Panc1 (cell line): ENCODE measurements at regions of chr2 and their contacts with region 1.

Region 1: GRCh38 chr2:9142551-9143263 is 63.9 kb upstream of the ASAP2 start:
- DNase-seq: peak; percentile 71
- ATAC-seq: peak; percentile 92
- H3K4me3 ChIP-seq: peak overlapping the region; percentile 29 to 66
- H3K27ac ChIP-seq: peak overlapping the region; percentile 94
- H3K4me1 ChIP-seq: peaks cover 32% of the 10 kb centered on the region
- H3K27me3 ChIP-seq: no peaks in the 10 kb centered on the region
- CTCF ChIP-seq: peak; percentile 99

Region 2: GRCh38 chr2:8872821-8873432 is 269.8 kb before region 1 on chr2:
- CTCF ChIA-PET with region 1: interaction called, 6 read pairs
- POLR2A ChIA-PET with region 1: no interaction called
- in situ Hi-C with region 1: no loop called
- intact Hi-C with region 1: loop called (anchors 2 kb)
- DNase-seq: peak; percentile 43
- ATAC-seq: peak; percentile 69
- H3K4me3 ChIP-seq: no peak overlapping the region
- H3K27ac ChIP-seq: no peak overlapping the region
- H3K4me1 ChIP-seq: no peaks in the 10 kb centered on the region
- H3K27me3 ChIP-seq: no peaks in the 10 kb centered on the region
- CTCF ChIP-seq: peak; percentile 75

Region 3: GRCh38 chr2:9205963-9206948 is 63.5 kb after region 1 on chr2 and contains the start of gene ASAP2:
- CTCF ChIA-PET with region 1: interaction called, 3 read pairs
- POLR2A ChIA-PET with region 1: interaction called, 6 read pairs
- in situ Hi-C with region 1: no loop called
- intact Hi-C with region 1: loop called (anchors 5 kb)
- DNase-seq: no peak
- ATAC-seq: peak; percentile 89
- H3K4me3 ChIP-seq: peak within 1 kb of the TSS; percentile 91 to 99
- H3K27ac ChIP-seq: peak within 1 kb of the TSS; percentile 97
- H3K4me1 ChIP-seq: peaks cover 22% of the 10 kb centered on the region
- H3K27me3 ChIP-seq: no peaks in the 10 kb centered on the region
- CTCF ChIP-seq: peak; percentile 91
- total RNA-seq, gene ASAP2: 107 TPM

Region 4: GRCh38 chr2:9234680-9235387 is 92.1 kb after region 1 on chr2:
- CTCF ChIA-PET with region 1: interaction called, 4 read pairs
- POLR2A ChIA-PET with region 1: no interaction called
- in situ Hi-C with region 1: no loop called
- intact Hi-C with region 1: loop called (anchors 5 kb)
- DNase-seq: no peak
- ATAC-seq: peak; percentile 64
- H3K4me3 ChIP-seq: peak overlapping the region; percentile 24 to 45
- H3K27ac ChIP-seq: peak overlapping the region; percentile 100
- H3K4me1 ChIP-seq: peaks cover 99% of the 10 kb centered on the region
- H3K27me3 ChIP-seq: no peaks in the 10 kb centered on the region
- CTCF ChIP-seq: no peak

Region 5: GRCh38 chr2:9287400-9288043 is 144.8 kb after region 1 on chr2:
- CTCF ChIA-PET with region 1: interaction called, 3 read pairs
- POLR2A ChIA-PET with region 1: no interaction called
- in situ Hi-C with region 1: no loop called
- intact Hi-C with region 1: loop called (anchors 10 kb)
- DNase-seq: peak; percentile 98
- ATAC-seq: peak; percentile 91
- H3K4me3 ChIP-seq: peak overlapping the region; percentile 1 to 19; a peak in 2 of 4 replicates
- H3K27ac ChIP-seq: peak overlapping the region; percentile 98
- H3K4me1 ChIP-seq: peaks cover 92% of the 10 kb centered on the region
- H3K27me3 ChIP-seq: no peaks in the 10 kb centered on the region
- CTCF ChIP-seq: no peak; the same call in 1 of the 2 replicates

Region 6: GRCh38 chr2:9333591-9334171 is 191.0 kb after region 1 on chr2:
- CTCF ChIA-PET with region 1: interaction called, 3 read pairs
- POLR2A ChIA-PET with region 1: interaction called, 3 read pairs
- in situ Hi-C with region 1: no loop called
- intact Hi-C with region 1: loop called (anchors 5 kb)
- DNase-seq: peak; percentile 55
- ATAC-seq: peak; percentile 82
- H3K4me3 ChIP-seq: no peak overlapping the region
- H3K27ac ChIP-seq: peak overlapping the region; percentile 20
- H3K4me1 ChIP-seq: peaks cover 6% of the 10 kb centered on the region
- H3K27me3 ChIP-seq: no peaks in the 10 kb centered on the region
- CTCF ChIP-seq: peak; percentile 77

Region 7: DNA sequence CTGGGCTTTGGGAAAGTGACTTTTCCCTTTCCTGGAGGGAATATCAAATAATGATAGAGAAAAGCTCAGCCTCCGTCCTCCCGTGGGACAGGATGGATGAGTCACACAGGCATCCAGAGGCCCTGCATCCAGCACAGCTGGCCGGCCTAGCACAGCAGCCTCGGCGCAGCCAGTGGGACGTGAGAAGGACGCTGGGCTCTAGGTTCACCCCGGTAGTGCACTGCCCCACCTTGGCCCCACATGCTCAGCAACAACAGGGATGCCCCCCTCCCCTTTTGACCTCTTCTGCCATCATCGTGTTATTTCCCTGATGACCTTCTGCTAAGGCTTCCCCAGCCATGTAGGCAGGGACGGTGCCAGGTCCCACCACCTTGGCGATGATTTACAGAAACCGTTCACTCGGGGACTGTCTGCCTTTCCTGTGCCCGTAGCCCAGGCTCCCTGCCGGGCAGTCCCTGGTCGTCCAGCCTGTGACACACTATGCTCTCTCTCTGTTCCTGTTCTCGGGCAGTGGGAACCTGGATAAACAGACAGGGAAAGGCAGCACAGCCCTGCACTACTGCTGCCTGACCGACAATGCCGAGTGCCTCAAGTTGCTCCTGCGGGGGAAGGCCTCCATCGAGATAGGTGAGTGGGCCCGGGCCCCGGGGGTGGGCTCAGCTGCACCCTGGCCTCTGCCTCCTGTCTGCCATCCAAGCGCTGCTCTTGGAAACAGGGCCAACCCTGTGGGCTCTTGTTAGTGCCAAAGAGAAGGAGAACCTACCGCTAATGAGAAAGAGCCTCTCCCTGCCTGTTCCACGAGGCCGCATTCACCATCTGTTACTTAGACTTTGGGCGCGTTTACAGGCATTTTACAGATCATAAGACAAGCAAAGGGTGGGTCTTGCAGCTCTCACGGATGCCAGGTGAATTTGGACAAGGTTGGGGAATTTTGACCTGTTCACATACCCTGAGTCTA is 236.0 kb after region 1 on chr2:
- CTCF ChIA-PET with region 1: no interaction called
- POLR2A ChIA-PET with region 1: no interaction called
- in situ Hi-C with region 1: no loop called
- intact Hi-C with region 1: loop called (anchors 10 kb)
- DNase-seq: no peak
- ATAC-seq: peak; percentile 73
- H3K4me3 ChIP-seq: peak overlapping the region in 1 of 2 experiments; percentile 15; a peak in 1 of 4 replicates
- H3K27ac ChIP-seq: peak overlapping the region; percentile 85
- H3K4me1 ChIP-seq: peaks cover 51% of the 10 kb centered on the region
- H3K27me3 ChIP-seq: no peaks in the 10 kb centered on the region
- CTCF ChIP-seq: no peak

Region 8: DNA sequence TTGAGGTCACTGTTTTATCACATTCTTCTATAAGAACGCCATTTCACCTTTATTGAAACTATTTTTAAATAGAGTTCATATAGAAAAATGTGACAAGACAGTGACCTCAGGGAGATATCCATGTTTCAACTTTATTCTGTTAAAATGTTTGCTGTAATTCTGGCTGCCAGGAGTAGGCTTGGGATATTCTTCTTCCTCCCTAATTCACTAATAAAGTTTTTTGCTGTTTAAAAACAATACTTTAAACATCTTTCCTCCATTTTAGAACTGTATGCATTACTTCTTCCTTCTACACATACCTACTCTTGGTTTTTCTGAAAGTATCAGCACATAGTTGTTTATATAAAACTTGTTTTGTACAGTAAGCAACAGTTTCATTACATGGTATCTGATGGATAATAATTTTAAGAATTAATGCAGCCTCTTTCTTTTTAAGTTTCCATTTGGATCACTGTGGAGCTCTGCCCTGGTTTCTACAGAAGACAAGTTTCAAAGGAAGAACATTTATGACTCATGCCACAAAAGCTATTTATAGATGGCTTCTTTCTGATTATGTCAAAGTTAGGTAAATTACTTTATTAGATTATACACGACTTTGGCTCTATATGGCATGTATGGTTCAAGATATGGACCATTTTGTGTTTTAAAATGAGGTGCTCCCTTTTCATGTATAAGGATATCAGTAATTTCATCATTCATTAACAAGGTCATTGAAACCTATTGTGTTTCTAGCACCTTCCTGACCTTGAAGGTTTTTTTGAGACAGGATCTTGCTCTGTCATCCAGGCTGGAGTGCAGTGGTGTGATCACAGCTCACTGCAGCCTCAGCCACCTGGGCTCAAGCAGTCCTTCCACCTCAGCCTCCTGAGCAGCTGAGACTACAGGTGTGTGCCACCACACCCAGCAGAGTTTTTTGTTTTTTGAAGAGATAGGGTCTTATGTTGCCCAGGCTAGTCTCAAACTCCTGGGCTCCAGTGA is 287.9 kb after region 1 on chr2:
- CTCF ChIA-PET with region 1: no interaction called
- POLR2A ChIA-PET with region 1: no interaction called
- in situ Hi-C with region 1: no loop called
- intact Hi-C with region 1: no loop called
- DNase-seq: no peak
- ATAC-seq: no peak
- H3K4me3 ChIP-seq: no peak overlapping the region
- H3K27ac ChIP-seq: no peak overlapping the region
- H3K4me1 ChIP-seq: no peaks in the 10 kb centered on the region
- H3K27me3 ChIP-seq: no peaks in the 10 kb centered on the region
- CTCF ChIP-seq: no peak